ENCODE measurements at regions of chr3 and their contacts with region 1.

Region 1: DNA sequence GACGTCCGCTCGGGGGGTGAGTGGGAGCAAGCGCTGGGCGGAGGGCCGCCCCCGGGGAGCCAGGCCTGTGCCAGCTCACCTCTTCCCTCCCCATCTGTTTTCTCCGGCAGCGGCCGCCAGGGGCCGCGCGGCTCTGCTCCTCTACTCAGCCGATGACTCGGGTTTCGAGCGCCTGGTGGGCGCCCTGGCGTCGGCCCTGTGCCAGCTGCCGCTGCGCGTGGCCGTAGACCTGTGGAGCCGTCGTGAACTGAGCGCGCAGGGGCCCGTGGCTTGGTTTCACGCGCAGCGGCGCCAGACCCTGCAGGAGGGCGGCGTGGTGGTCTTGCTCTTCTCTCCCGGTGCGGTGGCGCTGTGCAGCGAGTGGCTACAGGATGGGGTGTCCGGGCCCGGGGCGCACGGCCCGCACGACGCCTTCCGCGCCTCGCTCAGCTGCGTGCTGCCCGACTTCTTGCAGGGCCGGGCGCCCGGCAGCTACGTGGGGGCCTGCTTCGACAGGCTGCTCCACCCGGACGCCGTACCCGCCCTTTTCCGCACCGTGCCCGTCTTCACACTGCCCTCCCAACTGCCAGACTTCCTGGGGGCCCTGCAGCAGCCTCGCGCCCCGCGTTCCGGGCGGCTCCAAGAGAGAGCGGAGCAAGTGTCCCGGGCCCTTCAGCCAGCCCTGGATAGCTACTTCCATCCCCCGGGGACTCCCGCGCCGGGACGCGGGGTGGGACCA is 632 bp upstream of the CRELD1 start:
- DNase-seq: peak; percentile 89
- H3K4me3 Mint-ChIP-seq: peak overlapping the region; percentile 96
- H3K27ac Mint-ChIP-seq: peak overlapping the region; percentile 91
- H3K4me1 Mint-ChIP-seq: peaks cover 40% of the 10 kb centered on the region
- H3K27me3 Mint-ChIP-seq: no peaks in the 10 kb centered on the region

Region 2: GRCh38 chr3:9792405-9793160 is 140.4 kb before region 1 on chr3 and contains the starts of genes ARPC4 and TADA3:
- CTCF ChIA-PET with region 1: interaction called, 14 read pairs
- POLR2A ChIA-PET with region 1: interaction called, 10 read pairs
- DNase-seq: peak; percentile 93
- H3K4me3 Mint-ChIP-seq: peak within 1 kb of the TSS; percentile 97
- H3K27ac Mint-ChIP-seq: peak within 1 kb of the TSS; percentile 99
- H3K4me1 Mint-ChIP-seq: peaks cover 63% of the 10 kb centered on the region
- H3K27me3 Mint-ChIP-seq: no peaks in the 10 kb centered on the region
- total RNA-seq, gene ARPC4: 255 to 266 TPM
- total RNA-seq, gene TADA3: 88.1 to 88.3 TPM

Region 3: DNA sequence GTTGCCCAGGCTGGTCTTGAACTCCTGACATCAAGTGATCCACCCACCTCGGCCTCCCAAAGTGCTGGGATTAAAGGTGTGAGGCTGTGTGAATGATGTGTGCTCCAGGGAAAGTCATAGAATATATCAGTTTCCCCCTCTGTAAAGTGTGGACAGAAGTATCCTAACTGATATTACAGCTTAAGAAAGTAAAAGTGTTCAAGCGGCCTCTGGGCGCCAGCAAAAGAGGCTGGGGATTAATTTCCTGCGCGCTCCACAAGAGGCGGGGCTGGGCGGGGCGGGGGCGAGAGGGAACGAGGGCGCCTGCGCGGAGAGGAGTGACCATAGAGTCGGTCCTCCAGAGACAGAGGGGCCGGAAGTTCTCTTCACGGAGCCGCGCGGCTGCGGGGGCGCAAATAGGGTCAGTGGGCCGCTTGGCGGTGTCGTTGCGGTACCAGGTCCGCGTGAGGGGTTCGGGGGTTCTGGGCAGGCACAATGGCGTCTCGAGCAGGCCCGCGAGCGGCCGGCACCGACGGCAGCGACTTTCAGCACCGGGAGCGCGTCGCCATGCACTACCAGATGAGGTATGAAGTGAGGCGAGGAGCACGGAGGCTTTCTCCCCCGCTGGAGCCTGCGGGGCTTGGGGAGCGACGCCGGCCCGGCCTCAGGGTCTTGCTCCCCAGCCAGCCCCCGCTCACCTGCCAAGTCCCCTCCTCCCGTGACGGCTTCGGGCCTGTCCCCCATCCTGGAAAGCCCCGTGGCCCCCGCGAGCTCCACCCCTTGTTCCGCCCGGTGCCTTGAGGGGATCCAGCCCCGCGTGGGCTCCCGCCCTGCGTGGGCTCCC is 42.5 kb before region 1 on chr3 and contains the start of gene JAGN1:
- CTCF ChIA-PET with region 1: interaction called, 29 read pairs
- POLR2A ChIA-PET with region 1: interaction called, 51 read pairs
- DNase-seq: peak; percentile 92
- H3K4me3 Mint-ChIP-seq: peak within 1 kb of the TSS; percentile 99
- H3K27ac Mint-ChIP-seq: peak within 1 kb of the TSS; percentile 92
- H3K4me1 Mint-ChIP-seq: peaks cover 36% of the 10 kb centered on the region
- H3K27me3 Mint-ChIP-seq: no peaks in the 10 kb centered on the region
- total RNA-seq, gene JAGN1: 25.4 to 28.6 TPM

Region 4: DNA sequence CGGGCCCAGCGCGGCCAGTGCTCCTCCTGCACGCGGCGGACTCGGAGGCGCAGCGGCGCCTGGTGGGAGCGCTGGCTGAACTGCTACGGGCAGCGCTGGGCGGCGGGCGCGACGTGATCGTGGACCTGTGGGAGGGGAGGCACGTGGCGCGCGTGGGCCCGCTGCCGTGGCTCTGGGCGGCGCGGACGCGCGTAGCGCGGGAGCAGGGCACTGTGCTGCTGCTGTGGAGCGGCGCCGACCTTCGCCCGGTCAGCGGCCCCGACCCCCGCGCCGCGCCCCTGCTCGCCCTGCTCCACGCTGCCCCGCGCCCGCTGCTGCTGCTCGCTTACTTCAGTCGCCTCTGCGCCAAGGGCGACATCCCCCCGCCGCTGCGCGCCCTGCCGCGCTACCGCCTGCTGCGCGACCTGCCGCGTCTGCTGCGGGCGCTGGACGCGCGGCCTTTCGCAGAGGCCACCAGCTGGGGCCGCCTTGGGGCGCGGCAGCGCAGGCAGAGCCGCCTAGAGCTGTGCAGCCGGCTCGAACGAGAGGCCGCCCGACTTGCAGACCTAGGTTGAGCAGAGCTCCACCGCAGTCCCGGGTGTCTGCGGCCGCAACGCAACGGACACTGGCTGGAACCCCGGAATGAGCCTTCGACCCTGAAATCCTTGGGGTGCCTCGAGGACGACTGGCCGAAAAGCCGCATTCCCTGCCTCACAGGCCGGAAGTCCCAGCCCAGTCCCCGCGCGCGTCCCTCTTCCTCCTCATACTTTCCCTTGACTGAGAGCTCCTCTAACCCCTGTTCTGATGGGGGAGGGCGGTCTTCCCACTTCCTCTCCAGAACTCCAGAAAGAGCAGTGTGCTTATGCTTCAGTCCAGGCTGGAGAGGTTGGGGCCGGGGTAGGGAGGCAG is 17.5 kb before region 1 on chr3:
- CTCF ChIA-PET with region 1: interaction called, 51 read pairs
- POLR2A ChIA-PET with region 1: interaction called, 17 read pairs
- DNase-seq: peak; percentile 40
- H3K4me3 Mint-ChIP-seq: peak overlapping the region; percentile 58
- H3K27ac Mint-ChIP-seq: no peak overlapping the region
- H3K4me1 Mint-ChIP-seq: peaks cover 17% of the 10 kb centered on the region
- H3K27me3 Mint-ChIP-seq: peaks cover 14% of the 10 kb centered on the region

Region 5: DNA sequence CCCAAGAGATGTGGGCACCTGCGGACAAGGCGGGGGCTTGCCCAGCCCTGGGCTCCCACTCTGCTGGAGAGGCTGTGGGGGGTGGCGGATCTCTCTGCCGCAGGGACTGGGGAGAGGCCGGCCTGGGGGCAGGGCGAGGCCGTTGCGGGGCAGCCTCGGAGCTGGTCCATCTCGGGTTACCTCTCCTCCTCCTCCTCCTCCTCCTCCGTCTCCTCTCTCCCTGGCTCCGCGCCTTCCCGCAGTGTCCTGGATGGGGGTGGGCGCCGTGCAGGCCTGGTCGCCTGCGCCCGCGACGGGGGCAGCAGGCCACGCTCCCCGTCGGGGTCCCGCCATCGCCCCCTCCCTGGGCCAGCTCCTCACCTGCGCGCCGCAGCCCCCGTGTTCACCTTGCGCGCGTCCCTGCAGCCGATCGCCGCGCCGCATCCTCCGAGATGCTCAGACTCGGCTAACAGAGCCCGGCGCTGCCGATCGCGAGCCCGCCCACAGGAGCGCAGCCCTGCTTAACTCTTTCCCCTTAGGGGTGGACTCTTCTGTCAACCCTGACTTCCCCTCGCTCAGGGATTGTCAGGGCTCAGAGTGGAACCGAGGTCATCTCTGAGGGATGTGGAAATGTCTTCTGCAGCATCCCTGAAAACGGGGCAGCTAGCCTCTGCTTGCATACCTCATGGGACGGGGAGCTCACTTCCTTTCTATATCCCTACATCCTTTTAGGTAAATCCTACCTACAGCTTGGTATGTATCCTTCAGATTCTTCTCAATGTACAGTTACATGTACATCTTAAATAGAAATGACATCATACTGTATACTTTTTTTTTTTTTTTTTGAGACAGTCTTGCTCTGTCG is 19.2 kb after region 1 on chr3 and contains the start of gene PRRT3:
- CTCF ChIA-PET with region 1: interaction called, 87 read pairs
- POLR2A ChIA-PET with region 1: interaction called, 57 read pairs
- DNase-seq: peak; percentile 69
- H3K4me3 Mint-ChIP-seq: peak within 1 kb of the TSS; percentile 84
- H3K27ac Mint-ChIP-seq: no peak within 1 kb of the TSS
- H3K4me1 Mint-ChIP-seq: peaks cover 21% of the 10 kb centered on the region
- H3K27me3 Mint-ChIP-seq: no peaks in the 10 kb centered on the region
- total RNA-seq, gene PRRT3: 5.4 to 6.1 TPM

Region 6: DNA sequence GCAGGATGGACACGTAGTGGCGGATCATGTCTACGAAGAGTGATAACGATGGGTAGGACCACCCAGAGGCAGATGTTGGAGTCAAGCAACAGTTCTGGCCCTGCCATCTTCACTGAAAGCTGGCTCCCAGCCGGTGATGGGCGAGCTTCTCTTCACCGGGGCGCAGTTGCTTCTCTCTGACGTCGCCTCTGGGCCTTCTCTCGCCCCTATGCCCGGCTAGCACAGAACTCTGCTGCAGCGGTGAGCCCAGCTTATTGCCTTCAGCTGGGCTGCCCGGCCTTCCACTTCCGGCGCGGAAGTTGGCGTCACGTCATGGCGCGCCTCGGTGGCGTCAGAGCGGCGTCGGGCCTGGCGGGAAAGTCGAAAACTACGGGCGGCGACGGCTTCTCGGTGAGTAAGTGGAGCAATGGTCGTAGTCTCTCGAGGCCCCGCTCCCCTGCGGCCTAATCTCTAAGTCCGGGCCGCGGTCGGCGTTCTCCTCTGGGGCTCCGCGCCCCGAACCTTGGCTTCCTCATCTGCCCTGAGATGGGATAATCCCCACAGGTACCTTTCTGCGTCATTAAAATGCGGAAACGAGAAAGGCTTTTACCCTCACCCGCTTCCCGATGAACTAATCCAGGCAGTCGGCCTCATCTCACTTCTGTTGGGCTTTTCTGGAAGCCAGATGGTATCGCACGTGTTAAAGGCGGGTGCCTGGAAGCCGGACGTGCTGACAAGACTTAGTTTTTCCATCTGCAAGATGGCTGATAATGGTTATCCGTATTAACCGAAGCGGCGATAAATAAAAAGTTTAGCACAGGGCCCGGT is 93.3 kb after region 1 on chr3 and contains the start of gene FANCD2:
- CTCF ChIA-PET with region 1: interaction called, 6 read pairs
- POLR2A ChIA-PET with region 1: interaction called, 11 read pairs
- DNase-seq: peak; percentile 94
- H3K4me3 Mint-ChIP-seq: peak within 1 kb of the TSS; percentile 95
- H3K27ac Mint-ChIP-seq: peak within 1 kb of the TSS; percentile 93
- H3K4me1 Mint-ChIP-seq: peaks cover 53% of the 10 kb centered on the region
- H3K27me3 Mint-ChIP-seq: no peaks in the 10 kb centered on the region
- total RNA-seq, gene FANCD2: 54.3 to 60.8 TPM